Naive thymus-derived CD4-positive, alpha-beta T cell (primary cell): ENCODE measurements at regions of chr12 and their contacts with region 1.

Region 1: GRCh38 chr12:132761032-132761920 is at the start of gene ANKLE2:
- DNase-seq: peak; percentile 35 to 77 (median 63)
- ATAC-seq: peak; percentile 75
- H3K4me3 ChIP-seq: peak within 1 kb of the TSS; percentile 88
- H3K4me3 Mint-ChIP-seq: peak within 1 kb of the TSS; percentile 89 to 97 (median 94)
- H3K27ac ChIP-seq: peak within 1 kb of the TSS; percentile 87
- H3K27ac Mint-ChIP-seq: peak within 1 kb of the TSS; percentile 92 to 97 (median 95)
- H3K4me1 ChIP-seq: peaks cover 9 to 13% of the 10 kb centered on the region in 2 donors
- H3K4me1 Mint-ChIP-seq: peaks cover 25 to 43% (median 26%) of the 10 kb centered on the region in 7 donors
- H3K27me3 ChIP-seq: no peaks in the 10 kb centered on the region
- H3K27me3 Mint-ChIP-seq: no peaks in the 10 kb centered on the region
- total RNA-seq, gene ANKLE2: 69.5 to 95.5 (median 92.2) TPM

Region 2: DNA sequence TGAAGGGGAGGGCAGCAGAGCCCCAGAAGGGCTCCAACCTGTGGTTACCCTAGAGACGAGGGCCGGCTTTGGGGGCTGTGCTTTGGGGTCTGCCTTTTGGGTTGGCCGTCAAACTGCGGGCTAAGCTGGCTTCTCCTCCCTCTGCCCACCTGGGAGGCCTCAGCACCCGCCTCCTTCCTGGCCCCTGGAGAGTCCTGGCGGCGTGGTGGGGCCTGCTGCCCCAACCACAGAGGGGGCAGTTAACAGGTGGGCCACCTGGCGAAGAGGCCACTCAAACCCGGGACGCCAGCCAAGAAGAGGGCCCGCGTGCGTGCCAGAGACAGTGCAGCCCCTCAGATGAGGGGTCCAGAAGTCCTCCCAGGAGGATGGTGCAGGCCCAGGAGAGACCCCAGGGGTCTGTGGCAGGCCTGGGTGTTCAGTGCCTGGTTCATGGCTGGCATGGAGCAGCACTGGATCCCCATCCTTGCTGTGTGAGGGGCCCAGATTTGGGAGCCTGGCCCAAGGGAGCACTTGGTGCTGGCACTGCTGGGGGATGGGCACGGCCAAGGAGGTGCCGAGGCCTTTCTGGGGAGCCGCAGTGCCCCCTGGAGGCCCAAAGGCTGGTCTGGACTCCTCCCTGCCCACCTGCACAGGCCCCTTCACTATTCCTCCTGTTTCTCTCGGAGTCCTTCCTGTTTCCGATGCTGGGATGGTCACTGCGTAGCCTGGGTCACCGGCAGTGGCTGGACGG is 199.7 kb before region 1 on chr12:
- CTCF ChIA-PET with region 1: no interaction called
- POLR2A ChIA-PET with region 1: no interaction called
- intact Hi-C with region 1: no loop called
- DNase-seq: no peak
- ATAC-seq: no peak
- H3K4me3 ChIP-seq: no peak overlapping the region
- H3K4me3 Mint-ChIP-seq: peak overlapping the region in 7 of 10 donors; percentile 7 to 80 (median 66)
- H3K27ac ChIP-seq: no peak overlapping the region
- H3K27ac Mint-ChIP-seq: no peak overlapping the region
- H3K4me1 ChIP-seq: peaks cover 7 to 25% of the 10 kb centered on the region in 2 donors
- H3K4me1 Mint-ChIP-seq: peaks cover 4 to 25% (median 17%) of the 10 kb centered on the region in 7 donors
- H3K27me3 ChIP-seq: no peaks in the 10 kb centered on the region
- H3K27me3 Mint-ChIP-seq: peaks cover 0 to 15% (median 8%) of the 10 kb centered on the region in 5 donors

Region 3: DNA sequence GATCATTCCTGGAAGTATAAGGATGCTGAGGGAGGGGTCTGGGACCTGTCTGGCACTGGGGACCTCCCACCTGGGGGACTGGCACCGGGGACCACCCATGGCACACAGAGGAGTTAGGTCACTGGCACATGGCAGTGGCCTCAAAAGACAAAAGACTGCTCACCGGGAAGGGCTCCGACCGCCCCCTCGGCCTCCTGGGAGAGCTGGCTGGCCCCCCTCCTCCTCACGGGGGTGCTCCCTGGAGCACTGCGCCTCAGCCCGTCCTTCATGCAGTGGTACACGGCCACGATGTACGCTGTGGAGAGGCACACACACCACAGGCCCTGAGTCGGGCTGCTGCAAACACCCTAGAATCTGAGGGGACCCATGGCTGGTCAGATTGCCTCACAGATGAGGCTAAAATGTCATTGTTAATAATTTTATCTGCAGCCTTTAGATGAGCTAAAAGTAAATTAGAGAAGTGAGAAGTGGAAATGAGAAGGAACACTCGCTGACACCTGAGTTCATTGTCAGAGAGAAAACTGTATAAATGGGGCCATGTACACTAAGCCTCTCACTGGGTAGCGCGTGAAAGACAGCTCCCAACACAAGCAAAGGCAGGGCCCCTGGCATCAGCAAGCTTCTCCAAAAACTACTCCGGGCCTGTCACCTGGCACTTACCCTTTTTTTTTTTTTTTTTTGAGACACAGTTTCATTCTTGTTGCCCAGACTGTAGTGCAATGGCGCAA is 128.6 kb before region 1 on chr12:
- CTCF ChIA-PET with region 1: no interaction called
- POLR2A ChIA-PET with region 1: no interaction called
- intact Hi-C with region 1: no loop called
- DNase-seq: no peak
- ATAC-seq: no peak
- H3K4me3 ChIP-seq: no peak overlapping the region
- H3K4me3 Mint-ChIP-seq: no peak overlapping the region
- H3K27ac ChIP-seq: no peak overlapping the region
- H3K27ac Mint-ChIP-seq: no peak overlapping the region
- H3K4me1 ChIP-seq: no peaks in the 10 kb centered on the region
- H3K4me1 Mint-ChIP-seq: peaks cover 0 to 6% (median 0%) of the 10 kb centered on the region in 7 donors
- H3K27me3 ChIP-seq: no peaks in the 10 kb centered on the region
- H3K27me3 Mint-ChIP-seq: no peaks in the 10 kb centered on the region

Region 4: GRCh38 chr12:132687208-132688164 is 73.8 kb before region 1 on chr12 and contains the starts of genes POLE and PXMP2:
- CTCF ChIA-PET with region 1: no interaction called
- POLR2A ChIA-PET with region 1: no interaction called
- intact Hi-C with region 1: loop called (anchors 1 to 2 kb)
- DNase-seq: peak; percentile 85 to 94 (median 89)
- ATAC-seq: peak; percentile 98
- H3K4me3 ChIP-seq: peak within 1 kb of the TSS; percentile 47
- H3K4me3 Mint-ChIP-seq: peak within 1 kb of the TSS; percentile 65 to 89 (median 84)
- H3K27ac ChIP-seq: peak within 1 kb of the TSS; percentile 58
- H3K27ac Mint-ChIP-seq: peak within 1 kb of the TSS in 3 of 9 donors; percentile 45 to 92 (median 87)
- H3K4me1 ChIP-seq: peaks cover 4 to 14% of the 10 kb centered on the region in 2 donors
- H3K4me1 Mint-ChIP-seq: peaks cover 0 to 31% (median 22%) of the 10 kb centered on the region in 7 donors
- H3K27me3 ChIP-seq: no peaks in the 10 kb centered on the region
- H3K27me3 Mint-ChIP-seq: no peaks in the 10 kb centered on the region
- total RNA-seq, gene POLE: 54.5 to 138 (median 62.1) TPM
- total RNA-seq, gene PXMP2: 2.6 to 26.8 (median 5.4) TPM

Region 5: DNA sequence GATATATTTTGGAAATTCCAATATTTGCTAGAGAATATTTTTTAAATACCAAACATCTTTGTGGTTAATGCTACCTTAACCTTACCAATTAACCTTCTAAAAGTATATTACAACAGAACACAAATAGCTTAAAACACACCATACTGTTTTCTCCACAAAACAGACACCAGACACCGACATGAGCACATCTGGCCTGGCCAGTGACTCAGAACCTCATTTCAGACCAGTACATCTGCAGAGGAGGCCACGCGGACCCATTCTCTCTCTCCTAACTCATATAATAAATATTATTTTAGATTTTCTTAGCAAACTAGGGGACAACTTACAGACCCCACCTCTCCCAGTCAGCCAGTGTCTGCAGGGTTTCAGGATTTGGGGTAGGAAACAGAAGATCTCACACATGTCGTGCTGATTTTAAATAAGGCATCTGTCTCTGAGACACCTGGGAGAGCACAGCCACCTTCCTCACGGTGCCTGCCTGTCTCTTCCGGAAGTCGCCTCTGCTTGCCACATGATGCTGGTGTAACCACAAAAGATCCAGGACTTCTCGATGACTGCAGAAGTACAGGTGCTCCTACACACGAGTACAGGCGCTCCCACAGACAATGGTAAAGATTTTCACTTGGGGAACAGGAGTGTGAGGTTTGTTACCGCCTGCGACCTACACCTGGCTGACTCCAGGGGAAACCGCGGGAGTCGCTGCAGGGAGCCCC is 10.0 kb after region 1 on chr12:
- CTCF ChIA-PET with region 1: interaction called, 3 read pairs
- POLR2A ChIA-PET with region 1: interaction called, 9 read pairs
- intact Hi-C with region 1: loop called in 1 of 2 experiments (anchors 1 kb)
- DNase-seq: peak in 8 of 9 donors; percentile 38 to 82 (median 76)
- ATAC-seq: peak; percentile 80
- H3K4me3 ChIP-seq: no peak overlapping the region
- H3K4me3 Mint-ChIP-seq: peak overlapping the region; percentile 66 to 82 (median 73)
- H3K27ac ChIP-seq: peak overlapping the region; percentile 69
- H3K27ac Mint-ChIP-seq: peak overlapping the region; percentile 62 to 93 (median 84)
- H3K4me1 ChIP-seq: peaks cover 4 to 68% of the 10 kb centered on the region in 2 donors
- H3K4me1 Mint-ChIP-seq: peaks cover 29 to 89% (median 73%) of the 10 kb centered on the region in 7 donors
- H3K27me3 ChIP-seq: no peaks in the 10 kb centered on the region
- H3K27me3 Mint-ChIP-seq: no peaks in the 10 kb centered on the region

Region 6: GRCh38 chr12:132956011-132956788 is 194.9 kb after region 1 on chr12 and contains the start of gene ZNF605:
- CTCF ChIA-PET with region 1: no interaction called
- POLR2A ChIA-PET with region 1: no interaction called
- intact Hi-C with region 1: loop called in 1 of 2 experiments (anchors 1 kb)
- DNase-seq: peak; percentile 72 to 89 (median 80)
- ATAC-seq: peak; percentile 96
- H3K4me3 ChIP-seq: peak within 1 kb of the TSS; percentile 100
- H3K4me3 Mint-ChIP-seq: peak within 1 kb of the TSS; percentile 90 to 97 (median 95)
- H3K27ac ChIP-seq: peak within 1 kb of the TSS; percentile 85
- H3K27ac Mint-ChIP-seq: peak within 1 kb of the TSS; percentile 83 to 96 (median 91)
- H3K4me1 ChIP-seq: peaks cover 6 to 7% of the 10 kb centered on the region in 2 donors
- H3K4me1 Mint-ChIP-seq: peaks cover 19 to 53% (median 37%) of the 10 kb centered on the region in 7 donors
- H3K27me3 ChIP-seq: no peaks in the 10 kb centered on the region
- H3K27me3 Mint-ChIP-seq: no peaks in the 10 kb centered on the region
- total RNA-seq, gene ZNF605: 5.4 to 17.8 (median 11.8) TPM

Region 7: DNA sequence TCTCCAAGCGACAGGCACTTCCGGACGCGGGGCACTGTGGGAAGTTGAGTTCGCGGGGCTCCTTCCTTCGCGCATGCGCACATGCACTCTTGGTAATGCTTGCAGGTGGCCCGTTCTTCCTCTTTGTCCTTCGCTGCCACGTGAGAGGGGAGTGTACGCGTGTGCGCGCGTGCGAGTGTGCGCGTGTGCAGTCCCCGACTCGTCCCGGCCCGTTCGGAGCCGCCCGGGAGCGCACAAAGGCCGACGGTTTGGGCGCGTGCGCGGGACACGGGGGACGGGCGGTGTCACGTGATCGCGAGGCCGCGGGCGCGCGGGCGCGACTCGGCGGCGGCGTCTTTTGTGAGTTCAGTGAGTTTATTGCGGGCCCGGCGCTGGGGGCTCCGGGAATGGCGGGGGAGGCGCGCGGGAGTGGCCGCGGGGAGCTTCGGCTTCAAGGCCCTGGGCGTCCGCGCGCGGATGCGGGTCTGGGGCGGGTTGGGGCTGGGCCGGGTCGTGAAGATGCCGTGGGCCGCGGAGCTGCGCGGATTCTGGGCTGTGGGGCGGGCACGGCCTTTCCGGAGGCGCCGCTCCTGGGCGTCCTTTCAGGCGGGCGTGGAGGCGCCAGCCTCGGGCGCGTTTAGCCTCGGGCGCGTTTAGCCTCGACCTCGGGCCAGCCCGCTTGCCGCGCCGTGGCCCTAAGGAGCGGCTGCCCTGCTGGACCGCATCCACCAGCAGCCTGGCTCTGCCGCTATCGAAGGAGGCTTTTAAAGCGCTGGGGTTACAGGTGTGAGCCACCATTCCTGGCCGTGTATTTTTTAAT is 276.1 kb after region 1 on chr12 and contains the start of gene ZNF84:
- CTCF ChIA-PET with region 1: no interaction called
- POLR2A ChIA-PET with region 1: no interaction called
- intact Hi-C with region 1: loop called (anchors 1 kb)
- DNase-seq: peak; percentile 93 to 99 (median 97)
- ATAC-seq: peak; percentile 96
- H3K4me3 ChIP-seq: peak within 1 kb of the TSS; percentile 65
- H3K4me3 Mint-ChIP-seq: peak within 1 kb of the TSS; percentile 78 to 96 (median 94)
- H3K27ac ChIP-seq: peak within 1 kb of the TSS; percentile 94
- H3K27ac Mint-ChIP-seq: peak within 1 kb of the TSS; percentile 87 to 99 (median 94)
- H3K4me1 ChIP-seq: peaks cover 0 to 4% of the 10 kb centered on the region in 2 donors
- H3K4me1 Mint-ChIP-seq: peaks cover 0 to 37% (median 13%) of the 10 kb centered on the region in 7 donors
- H3K27me3 ChIP-seq: no peaks in the 10 kb centered on the region
- H3K27me3 Mint-ChIP-seq: peaks cover 0 to 9% (median 3%) of the 10 kb centered on the region in 5 donors
- total RNA-seq, gene ZNF84: 27.4 to 52.7 (median 31.6) TPM

Region 8: GRCh38 chr12:133130038-133130807 is 368.9 kb after region 1 on chr12 and contains the starts of genes ZNF10 and ZNF891:
- CTCF ChIA-PET with region 1: no interaction called
- POLR2A ChIA-PET with region 1: no interaction called
- intact Hi-C with region 1: loop called (anchors 1 to 5 kb)
- DNase-seq: peak; percentile 96 to 99 (median 98)
- ATAC-seq: peak; percentile 93
- H3K4me3 ChIP-seq: peak within 1 kb of the TSS; percentile 62
- H3K4me3 Mint-ChIP-seq: peak within 1 kb of the TSS; percentile 90 to 99 (median 94)
- H3K27ac ChIP-seq: peak within 1 kb of the TSS; percentile 98
- H3K27ac Mint-ChIP-seq: peak within 1 kb of the TSS; percentile 97 to 100 (median 99)
- H3K4me1 ChIP-seq: peaks cover 0 to 7% of the 10 kb centered on the region in 2 donors
- H3K4me1 Mint-ChIP-seq: peaks cover 15 to 51% (median 27%) of the 10 kb centered on the region in 7 donors
- H3K27me3 ChIP-seq: no peaks in the 10 kb centered on the region
- H3K27me3 Mint-ChIP-seq: no peaks in the 10 kb centered on the region
- total RNA-seq, gene ZNF10: 5.2 to 35.0 (median 29.2) TPM
- total RNA-seq, gene ZNF891: 2.4 to 7.9 (median 6.6) TPM